Heart right ventricle (tissue), 16 donors: ENCODE measurements at regions of chr2 and their contacts with region 1.

Region 1: DNA sequence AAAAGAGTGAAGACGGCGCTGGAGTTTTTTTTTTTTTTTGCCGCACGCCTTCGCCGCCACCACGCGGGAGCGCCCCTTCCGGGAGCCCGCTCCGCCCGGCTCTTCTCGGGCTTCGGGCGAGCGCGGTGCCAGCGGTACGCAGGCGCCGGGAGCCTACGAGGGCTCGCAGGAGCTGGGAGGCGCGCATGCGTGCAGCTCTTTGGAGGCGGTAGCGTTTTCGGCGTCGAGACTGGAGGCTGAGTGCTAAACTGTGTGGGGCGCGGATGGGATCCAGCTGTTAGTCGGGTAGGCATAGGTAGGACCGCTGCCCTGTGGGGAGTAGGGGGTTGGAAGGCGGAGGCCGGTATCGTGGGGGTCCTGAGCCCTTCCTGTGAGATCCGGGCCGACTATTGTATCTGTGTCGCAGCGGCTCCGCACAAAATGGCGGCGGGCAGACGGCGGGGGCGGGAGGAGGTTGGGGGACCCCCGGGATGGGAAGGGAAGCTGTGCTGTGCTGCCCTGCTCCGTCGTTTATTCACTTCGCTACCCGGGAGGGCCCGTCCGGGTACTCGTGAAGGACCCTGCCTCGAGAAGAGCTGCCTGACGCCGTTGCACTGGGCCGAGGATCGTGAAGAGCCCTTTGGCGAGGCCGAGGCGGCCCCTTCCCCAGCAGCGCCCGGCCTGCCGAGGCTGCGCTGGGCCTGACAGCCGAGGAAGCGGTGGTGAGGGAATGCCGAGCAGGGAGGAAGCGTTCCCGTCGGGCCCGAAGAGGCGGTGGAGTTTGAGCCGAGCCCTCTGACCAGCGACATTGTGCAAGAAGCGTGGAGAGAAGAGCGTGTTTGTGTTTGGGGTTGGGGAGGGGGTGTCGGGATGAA is at the start of gene ZNF638:
- DNase-seq: peak; percentile 92 to 95
- ATAC-seq: peak; percentile 99
- H3K4me3 ChIP-seq: peak within 1 kb of the TSS; percentile 71 to 97 (median 84)
- H3K27ac ChIP-seq: peak within 1 kb of the TSS; percentile 80 to 96 (median 92)
- H3K4me1 ChIP-seq: peaks cover 3 to 52% (median 41%) of the 10 kb centered on the region in 9 donors
- H3K27me3 ChIP-seq: no peaks in the 10 kb centered on the region
- CTCF ChIP-seq: peak; percentile 62 to 92 (median 84)
- total RNA-seq, gene ZNF638: 68.4 to 100 (median 82.8) TPM

Region 2: GRCh38 chr2:71276311-71277146 is 55.3 kb before region 1 on chr2:
- intact Hi-C with region 1: loop called in 4 of 10 experiments (anchors 5 kb)
- DNase-seq: peak; percentile 90 to 94
- ATAC-seq: peak; percentile 97 to 99 (median 98)
- H3K4me3 ChIP-seq: peak overlapping the region; percentile 55 to 73 (median 66)
- H3K27ac ChIP-seq: peak overlapping the region; percentile 77 to 93 (median 89)
- H3K4me1 ChIP-seq: peaks cover 0 to 53% (median 19%) of the 10 kb centered on the region in 9 donors
- H3K27me3 ChIP-seq: peaks cover 0 to 39% (median 0%) of the 10 kb centered on the region in 7 donors
- CTCF ChIP-seq: peak in 2 of 9 donors; percentile 12 to 18

Region 3: GRCh38 chr2:71282495-71282894 is 49.3 kb before region 1 on chr2:
- intact Hi-C with region 1: loop called in 4 of 10 experiments (anchors 5 kb)
- DNase-seq: no peak
- ATAC-seq: peak in 3 of 8 donors; percentile 25 to 52 (median 37)
- H3K4me3 ChIP-seq: no peak overlapping the region
- H3K27ac ChIP-seq: peak overlapping the region in 9 of 10 donors; percentile 14 to 92 (median 51)
- H3K4me1 ChIP-seq: peaks cover 6 to 76% (median 23%) of the 10 kb centered on the region in 9 donors
- H3K27me3 ChIP-seq: peaks cover 0 to 19% (median 0%) of the 10 kb centered on the region in 7 donors
- CTCF ChIP-seq: peak in 2 of 9 donors; percentile 14 to 21

Region 4: DNA sequence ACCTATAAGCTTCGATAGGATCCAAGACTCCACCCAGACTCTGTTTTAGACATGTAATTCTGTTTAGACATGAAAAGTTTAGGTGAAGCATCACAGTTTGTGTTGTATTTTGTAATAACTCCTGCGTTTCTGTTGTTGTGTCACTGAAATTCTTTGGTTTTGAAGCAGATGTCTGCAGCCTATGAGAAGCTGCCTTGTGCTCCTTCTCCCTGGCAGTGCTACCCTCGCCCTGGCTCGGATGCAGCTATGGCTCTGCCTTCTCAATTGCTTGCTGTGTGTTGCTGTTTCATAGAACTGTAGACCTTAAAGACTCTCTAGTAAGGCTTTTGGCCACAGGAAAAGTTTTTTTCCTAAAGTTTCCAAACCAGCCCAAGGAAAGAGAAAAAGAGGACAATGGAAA is 40.4 kb before region 1 on chr2:
- intact Hi-C with region 1: loop called in 3 of 10 experiments (anchors 5 kb)
- DNase-seq: no peak
- ATAC-seq: peak in 1 of 8 donors; percentile 56
- H3K4me3 ChIP-seq: no peak overlapping the region
- H3K27ac ChIP-seq: no peak overlapping the region
- H3K4me1 ChIP-seq: peaks cover 0 to 21% (median 13%) of the 10 kb centered on the region in 9 donors
- H3K27me3 ChIP-seq: no peaks in the 10 kb centered on the region
- CTCF ChIP-seq: no peak

Region 5: DNA sequence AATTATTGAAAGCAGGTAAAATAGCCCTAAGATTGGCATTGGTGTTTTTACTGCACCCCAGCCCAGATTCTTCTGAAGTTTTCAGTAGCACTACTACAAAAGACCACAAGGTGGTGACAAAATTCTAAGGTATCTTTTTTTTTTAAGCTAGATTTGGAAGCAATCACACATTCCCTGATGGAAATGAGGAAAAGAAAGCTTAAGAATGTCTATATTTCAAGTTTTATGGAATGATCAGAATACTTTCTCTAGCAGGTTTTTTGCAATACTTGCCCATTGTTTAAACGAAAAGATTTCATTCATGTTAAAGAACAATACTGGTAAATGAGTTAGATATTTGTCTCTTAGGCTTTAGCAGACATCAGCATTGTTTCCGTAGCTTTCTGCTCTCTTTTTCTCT is 32.3 kb before region 1 on chr2:
- intact Hi-C with region 1: loop called in 3 of 10 experiments (anchors 5 kb)
- DNase-seq: no peak
- ATAC-seq: no peak
- H3K4me3 ChIP-seq: no peak overlapping the region
- H3K27ac ChIP-seq: no peak overlapping the region
- H3K4me1 ChIP-seq: peaks cover 0 to 6% (median 0%) of the 10 kb centered on the region in 9 donors
- H3K27me3 ChIP-seq: no peaks in the 10 kb centered on the region
- CTCF ChIP-seq: peak; percentile 46 to 77 (median 72)